ENCODE measurements at regions of chr7 and their contacts with region 1.

Region 1: DNA sequence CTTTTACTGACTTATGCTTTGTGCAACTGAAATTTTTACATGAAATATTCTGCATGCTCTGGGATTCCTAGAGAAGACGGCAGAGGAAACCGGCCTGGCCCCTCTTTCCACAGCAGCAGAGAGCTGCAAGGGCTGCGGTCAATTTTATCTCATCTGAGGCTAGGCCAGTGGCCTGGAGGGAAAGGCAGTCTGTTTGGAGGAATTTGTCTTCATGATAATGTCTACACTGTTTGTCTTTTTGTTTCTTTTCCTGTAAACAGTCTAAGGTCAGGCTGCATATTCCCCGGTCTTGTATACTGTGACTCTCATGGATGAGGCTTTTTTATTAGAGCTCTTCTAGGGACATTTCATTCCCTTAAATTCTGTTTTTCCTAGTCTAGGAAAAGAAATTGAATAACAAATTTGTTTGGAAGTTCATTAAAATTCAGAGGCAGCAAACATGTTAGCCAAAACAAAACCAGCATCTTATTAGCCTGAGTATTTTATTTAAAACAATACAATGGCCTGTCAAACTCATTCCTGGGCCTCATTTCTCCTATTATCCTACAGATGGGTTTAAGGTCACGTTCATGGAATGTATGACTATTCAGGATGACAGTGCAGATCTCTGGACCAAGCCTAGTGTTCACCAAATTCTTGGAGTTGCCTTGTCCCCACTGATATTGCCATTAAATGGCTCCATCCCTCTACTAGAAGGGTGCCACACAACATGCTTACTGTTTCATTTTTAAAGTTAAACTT is 26.4 kb downstream of the LAMB4 start:
- H3K4me3 ChIP-seq: no peak overlapping the region
- H3K27ac ChIP-seq: no peak overlapping the region
- H3K4me1 ChIP-seq: no peaks in the 10 kb centered on the region
- CTCF ChIP-seq: no peak

Region 2: DNA sequence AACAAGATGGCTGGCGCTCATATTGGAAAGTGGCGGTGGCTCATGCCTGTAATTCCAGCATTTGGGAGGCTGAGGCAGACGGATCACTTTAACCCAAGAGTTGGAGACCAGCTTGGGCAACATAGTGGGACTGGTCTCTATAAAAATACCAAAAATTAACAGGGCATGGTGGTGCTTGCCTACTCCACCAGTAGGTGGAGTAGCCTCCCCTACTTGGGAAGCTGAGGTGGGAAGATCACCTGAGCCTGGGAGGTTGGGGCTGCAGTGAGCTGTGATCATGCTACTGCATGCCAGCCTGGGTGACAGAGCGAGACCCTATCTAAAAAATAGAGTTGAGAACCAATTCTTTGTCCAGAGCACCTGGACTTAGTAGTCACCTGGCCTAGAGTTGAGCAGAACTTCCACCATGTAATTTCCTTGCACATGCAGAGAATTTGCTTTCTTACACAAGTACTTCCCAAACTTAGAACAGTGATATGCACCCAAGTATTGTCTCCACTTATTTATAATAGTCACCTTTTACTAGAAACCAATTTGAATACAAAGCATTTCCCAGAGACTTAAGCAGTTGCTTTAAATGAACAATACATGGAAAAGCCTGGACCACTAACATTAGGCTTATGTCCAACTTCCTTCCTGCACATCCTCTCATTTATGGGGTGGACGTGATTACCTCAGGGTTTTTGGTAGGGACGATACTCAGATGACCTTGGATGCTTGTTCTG is 10.6 kb after region 1 on chr7:
- CTCF ChIA-PET with region 1: interaction called, 10 read pairs
- POLR2A ChIA-PET with region 1: no interaction called
- H3K4me3 ChIP-seq: no peak overlapping the region
- H3K27ac ChIP-seq: no peak overlapping the region
- H3K4me1 ChIP-seq: no peaks in the 10 kb centered on the region
- CTCF ChIP-seq: no peak

Measured in HEK293 (cell line).